AG04450 (cell line): ENCODE measurements at regions of chr1 and their contacts with region 1.

Region 1: GRCh38 chr1:160291248-160292220 is 6.6 kb upstream of the PEX19 start:
- DNase-seq: peak; percentile 32
- H3K4me3 ChIP-seq: no peak overlapping the region
- H3K27ac ChIP-seq: no peak overlapping the region
- H3K27me3 ChIP-seq: no peaks in the 10 kb centered on the region
- CTCF ChIP-seq: peak; percentile 82

Region 2: DNA sequence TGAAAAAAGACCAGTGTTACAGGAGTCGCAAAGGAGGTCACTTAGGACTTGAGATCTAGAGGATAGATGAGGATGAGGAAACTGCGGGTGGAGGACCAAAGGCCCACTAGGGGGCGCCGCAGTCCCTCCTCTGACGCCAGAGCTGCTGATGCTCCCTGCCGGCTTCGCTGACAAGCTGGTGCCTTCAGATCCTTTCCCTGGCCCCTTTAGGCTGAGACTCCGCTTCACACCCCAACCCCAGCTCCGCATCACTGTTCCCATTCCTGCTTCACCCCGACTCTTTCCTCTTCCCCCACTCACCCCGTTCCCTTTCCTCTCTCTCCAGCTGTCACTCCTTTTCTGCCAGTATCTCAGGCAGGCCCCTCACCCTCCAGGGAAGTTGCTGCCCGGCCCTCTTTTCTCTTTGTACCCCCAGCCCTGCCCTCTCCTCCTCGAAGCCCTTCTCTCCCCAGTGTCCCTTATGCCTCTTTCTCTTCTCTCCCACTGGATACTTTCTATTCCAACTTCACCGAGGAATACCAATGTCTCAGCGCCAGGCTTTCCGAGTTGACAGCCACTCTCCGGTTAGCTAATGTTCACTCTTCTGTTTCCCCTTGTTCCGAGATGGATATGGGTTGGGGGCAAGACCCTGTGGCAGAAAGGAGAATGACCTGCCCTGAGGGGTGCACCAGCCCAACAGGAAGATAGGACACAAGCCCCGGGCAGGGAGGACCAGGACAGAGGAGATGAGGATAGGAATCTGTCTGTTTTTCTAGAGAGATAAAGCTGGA is 205.7 kb before region 1 on chr1:
- CTCF ChIA-PET with region 1: interaction called, 22 read pairs
- POLR2A ChIA-PET with region 1: no interaction called
- DNase-seq: peak; percentile 32
- H3K4me3 ChIP-seq: no peak overlapping the region
- H3K27ac ChIP-seq: no peak overlapping the region
- H3K27me3 ChIP-seq: peaks cover 43% of the 10 kb centered on the region
- CTCF ChIP-seq: peak; percentile 87

Region 3: GRCh38 chr1:160219062-160219929 is 72.2 kb before region 1 on chr1:
- CTCF ChIA-PET with region 1: interaction called, 29 read pairs
- POLR2A ChIA-PET with region 1: no interaction called
- DNase-seq: peak; percentile 55
- H3K4me3 ChIP-seq: no peak overlapping the region
- H3K27ac ChIP-seq: peak overlapping the region; percentile 71
- H3K27me3 ChIP-seq: no peaks in the 10 kb centered on the region
- CTCF ChIP-seq: peak; percentile 84

Region 4: DNA sequence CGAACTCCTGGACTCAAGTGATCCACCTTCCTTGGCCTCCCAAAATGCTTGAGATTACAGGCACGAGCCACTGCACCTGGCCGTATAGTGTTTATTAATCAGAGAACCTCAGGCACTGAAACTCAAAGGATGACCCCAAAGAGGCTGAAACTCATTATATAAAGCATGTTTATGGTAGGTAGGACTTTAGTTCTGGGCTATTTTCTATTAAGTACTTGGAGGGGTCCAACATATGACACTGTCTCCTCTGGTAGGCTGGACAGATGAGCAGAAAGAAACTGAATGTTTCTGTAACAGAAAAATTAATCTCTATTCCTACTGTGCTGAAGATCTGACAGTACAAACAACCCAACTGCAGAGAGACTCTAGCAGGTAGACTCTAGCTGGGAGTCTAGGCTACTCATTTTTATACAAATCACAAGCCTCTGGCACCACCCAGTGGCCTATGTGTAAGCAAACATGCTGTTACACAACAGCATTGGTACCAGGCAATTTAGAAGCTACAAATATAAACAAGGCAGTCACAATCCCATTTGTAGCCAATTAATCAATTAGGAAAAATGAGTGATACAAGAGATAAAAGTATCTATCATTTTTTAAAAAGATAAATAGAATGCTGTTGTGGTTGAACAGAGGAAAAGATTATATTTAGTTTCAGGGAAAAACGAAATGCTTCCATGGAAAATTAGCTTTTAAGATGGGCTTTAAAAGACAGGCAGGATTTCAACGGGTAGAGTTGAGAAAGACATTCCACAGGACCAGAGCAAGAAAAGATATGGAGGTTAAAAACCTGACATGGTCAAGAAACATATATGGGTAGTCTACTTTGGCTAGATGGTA is 39.6 kb before region 1 on chr1:
- CTCF ChIA-PET with region 1: interaction called, 19 read pairs
- POLR2A ChIA-PET with region 1: no interaction called
- DNase-seq: peak; percentile 49
- H3K4me3 ChIP-seq: no peak overlapping the region
- H3K27ac ChIP-seq: no peak overlapping the region
- H3K27me3 ChIP-seq: no peaks in the 10 kb centered on the region
- CTCF ChIP-seq: peak; percentile 76

Region 5: GRCh38 chr1:160307118-160307854 is 15.8 kb after region 1 on chr1:
- CTCF ChIA-PET with region 1: interaction called, 60 read pairs
- POLR2A ChIA-PET with region 1: no interaction called
- DNase-seq: no peak
- H3K4me3 ChIP-seq: no peak overlapping the region
- H3K27ac ChIP-seq: peak overlapping the region; percentile 25
- H3K27me3 ChIP-seq: no peaks in the 10 kb centered on the region
- CTCF ChIP-seq: no peak

Region 6: DNA sequence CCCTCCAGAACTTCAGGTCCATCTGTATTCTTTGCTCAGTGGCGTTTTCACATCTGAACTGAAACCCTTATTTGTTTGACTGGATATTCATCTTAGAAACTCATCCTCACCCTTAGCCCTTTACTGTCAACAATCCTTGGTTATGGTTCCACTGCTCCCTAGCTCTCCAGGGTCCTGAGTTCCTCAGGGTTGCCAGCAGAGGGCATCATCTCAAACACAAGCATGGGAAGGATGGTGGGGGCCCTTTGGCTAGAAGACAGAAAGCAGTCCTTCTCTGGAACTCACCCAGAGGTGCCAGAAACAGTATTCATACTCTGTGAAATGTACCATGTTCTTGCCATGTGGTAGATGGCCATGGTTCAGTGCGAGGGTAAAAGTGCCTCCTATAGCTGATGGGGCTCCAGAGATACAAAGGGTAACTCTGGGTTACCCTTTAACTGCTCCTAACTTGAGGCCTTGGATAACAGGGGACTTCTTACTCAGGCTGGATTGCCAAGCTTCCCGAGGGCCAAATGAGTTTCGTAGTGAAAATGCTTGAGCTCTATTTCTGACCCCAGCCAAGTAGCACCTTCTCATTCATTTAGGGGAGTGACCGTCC is 63.0 kb after region 1 on chr1:
- CTCF ChIA-PET with region 1: interaction called, 11 read pairs
- POLR2A ChIA-PET with region 1: no interaction called
- DNase-seq: no peak
- H3K4me3 ChIP-seq: no peak overlapping the region
- H3K27ac ChIP-seq: no peak overlapping the region
- H3K27me3 ChIP-seq: no peaks in the 10 kb centered on the region
- CTCF ChIP-seq: peak; percentile 55